Mammary epithelial cell (primary cell): ENCODE measurements at regions of chr16 and their contacts with region 1.

Region 1: DNA sequence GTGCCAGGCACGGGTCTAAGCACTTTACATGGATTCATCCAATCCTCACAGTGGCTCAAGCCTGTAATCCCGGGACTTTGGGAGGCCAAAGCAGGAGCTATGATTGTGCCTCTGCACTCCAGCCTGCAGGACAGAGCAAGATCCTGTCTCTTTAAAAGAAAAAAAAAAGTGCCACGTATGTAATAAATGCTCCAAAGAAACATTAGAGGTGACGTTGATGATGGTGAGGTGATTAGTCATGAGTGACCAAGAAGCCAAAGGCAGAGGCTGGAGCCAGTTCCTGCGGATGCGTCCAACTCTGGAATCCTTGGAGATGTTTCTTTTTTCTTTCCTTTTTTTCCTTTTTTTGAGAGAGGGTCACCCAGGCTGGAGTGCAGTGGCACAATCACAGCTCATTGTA is 59.4 kb upstream of the SIAH1 start:
- DNase-seq: peak; percentile 84
- H3K4me3 ChIP-seq: no peak overlapping the region
- H3K27ac ChIP-seq: peak overlapping the region; percentile 40
- H3K4me1 ChIP-seq: peaks cover 8% of the 10 kb centered on the region
- H3K27me3 ChIP-seq: no peaks in the 10 kb centered on the region
- CTCF ChIP-seq: no peak

Region 2: GRCh38 chr16:48081656-48082055 is 362.9 kb before region 1 on chr16:
- CTCF ChIA-PET with region 1: no interaction called
- dilution Hi-C with region 1: no loop called
- in situ Hi-C with region 1: no loop called
- intact Hi-C with region 1: no loop called
- DNase-seq: peak; percentile 90
- H3K4me3 ChIP-seq: no peak overlapping the region
- H3K27ac ChIP-seq: no peak overlapping the region
- H3K4me1 ChIP-seq: peaks cover 14% of the 10 kb centered on the region
- H3K27me3 ChIP-seq: no peaks in the 10 kb centered on the region
- CTCF ChIP-seq: no peak

Region 3: GRCh38 chr16:48300391-48300856 is 144.2 kb before region 1 on chr16:
- CTCF ChIA-PET with region 1: no interaction called
- dilution Hi-C with region 1: no loop called
- in situ Hi-C with region 1: no loop called
- intact Hi-C with region 1: no loop called
- DNase-seq: no peak
- H3K4me3 ChIP-seq: no peak overlapping the region
- H3K27ac ChIP-seq: no peak overlapping the region
- H3K4me1 ChIP-seq: peaks cover 7% of the 10 kb centered on the region
- H3K27me3 ChIP-seq: no peaks in the 10 kb centered on the region
- CTCF ChIP-seq: no peak

Region 4: GRCh38 chr16:48385272-48386150 is 59.1 kb before region 1 on chr16 and contains the start of gene SIAH1:
- CTCF ChIA-PET with region 1: no interaction called
- dilution Hi-C with region 1: loop called (anchors 5 kb)
- in situ Hi-C with region 1: no loop called
- intact Hi-C with region 1: loop called (anchors 2 kb)
- DNase-seq: peak; percentile 77
- H3K4me3 ChIP-seq: peak within 1 kb of the TSS; percentile 90 to 95 (median 92)
- H3K27ac ChIP-seq: peak within 1 kb of the TSS; percentile 88
- H3K4me1 ChIP-seq: peaks cover 3% of the 10 kb centered on the region
- H3K27me3 ChIP-seq: no peaks in the 10 kb centered on the region
- CTCF ChIP-seq: no peak
- total RNA-seq, gene SIAH1: 22.3 to 46.0 TPM

Region 5: GRCh38 chr16:48393485-48394354 is 50.9 kb before region 1 on chr16:
- CTCF ChIA-PET with region 1: no interaction called
- dilution Hi-C with region 1: loop called (anchors 5 kb)
- in situ Hi-C with region 1: no loop called
- intact Hi-C with region 1: no loop called
- DNase-seq: peak; percentile 32
- H3K4me3 ChIP-seq: no peak overlapping the region
- H3K27ac ChIP-seq: no peak overlapping the region
- H3K4me1 ChIP-seq: no peaks in the 10 kb centered on the region
- H3K27me3 ChIP-seq: no peaks in the 10 kb centered on the region
- CTCF ChIP-seq: no peak

Region 6: GRCh38 chr16:48426244-48427141 is 18.1 kb before region 1 on chr16:
- CTCF ChIA-PET with region 1: no interaction called
- dilution Hi-C with region 1: no loop called
- in situ Hi-C with region 1: no loop called
- intact Hi-C with region 1: no loop called
- DNase-seq: no peak
- H3K4me3 ChIP-seq: no peak overlapping the region
- H3K27ac ChIP-seq: no peak overlapping the region
- H3K4me1 ChIP-seq: no peaks in the 10 kb centered on the region
- H3K27me3 ChIP-seq: no peaks in the 10 kb centered on the region
- CTCF ChIP-seq: no peak

Region 7: DNA sequence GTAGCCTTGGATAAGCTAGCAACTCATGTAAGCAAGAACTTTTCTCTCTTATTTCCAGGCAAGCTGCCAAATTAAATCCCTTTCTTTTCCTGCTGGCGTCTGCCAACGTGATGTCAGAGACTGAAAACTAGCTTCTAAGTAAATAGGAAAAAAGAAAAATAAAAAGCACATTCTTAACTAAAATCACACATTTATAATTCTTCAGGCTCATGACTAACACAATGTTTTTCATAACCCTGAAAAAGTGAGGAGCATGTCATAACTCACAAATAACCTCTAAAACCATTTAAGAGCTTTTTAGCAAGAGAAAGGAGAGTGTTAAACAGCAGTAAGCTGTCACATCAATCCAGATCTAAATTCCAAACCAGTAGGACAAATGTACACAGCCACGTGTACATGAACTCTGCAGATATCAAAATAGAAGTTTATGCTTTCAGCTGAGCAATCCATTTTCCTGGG is 55.4 kb after region 1 on chr16:
- CTCF ChIA-PET with region 1: no interaction called
- dilution Hi-C with region 1: loop called (anchors 5 kb)
- in situ Hi-C with region 1: no loop called
- intact Hi-C with region 1: no loop called
- DNase-seq: peak; percentile 33
- H3K4me3 ChIP-seq: no peak overlapping the region
- H3K27ac ChIP-seq: no peak overlapping the region
- H3K4me1 ChIP-seq: no peaks in the 10 kb centered on the region
- H3K27me3 ChIP-seq: no peaks in the 10 kb centered on the region
- CTCF ChIP-seq: no peak

Region 8: GRCh38 chr16:48526058-48526957 is 81.7 kb after region 1 on chr16:
- CTCF ChIA-PET with region 1: no interaction called
- dilution Hi-C with region 1: loop called (anchors 5 kb)
- in situ Hi-C with region 1: no loop called
- intact Hi-C with region 1: no loop called
- DNase-seq: peak; percentile 75
- H3K4me3 ChIP-seq: no peak overlapping the region
- H3K27ac ChIP-seq: peak overlapping the region; percentile 9
- H3K4me1 ChIP-seq: peaks cover 5% of the 10 kb centered on the region
- H3K27me3 ChIP-seq: no peaks in the 10 kb centered on the region
- CTCF ChIP-seq: peak; percentile 54 to 81